Breast epithelium (tissue), 4 donors: ENCODE measurements at regions of chr4 and their contacts with region 1.

Region 1: DNA sequence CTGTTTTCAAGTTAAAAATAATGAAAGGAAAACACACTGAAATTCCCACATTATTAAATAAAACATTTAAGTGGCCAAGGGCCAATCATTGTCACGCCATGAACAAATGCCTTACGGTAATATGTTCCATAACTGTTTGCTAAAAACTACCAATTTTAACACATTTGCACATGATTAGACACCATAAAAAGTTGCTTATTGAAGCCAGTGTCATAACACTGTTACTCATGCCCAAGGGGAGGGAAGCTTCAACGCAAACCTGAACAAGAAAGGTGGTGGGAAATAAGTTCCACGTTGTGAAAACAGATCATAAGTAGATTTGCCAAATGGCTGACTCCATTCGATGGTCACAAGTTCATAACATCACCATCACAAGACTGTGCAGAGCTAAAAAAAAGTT is 739.3 kb upstream of the FAM241A start:
- DNase-seq: no peak
- H3K4me3 ChIP-seq: no peak overlapping the region
- H3K27ac ChIP-seq: no peak overlapping the region
- H3K4me1 ChIP-seq: no peaks in the 10 kb centered on the region
- H3K27me3 ChIP-seq: no peaks in the 10 kb centered on the region
- CTCF ChIP-seq: no peak
- POLR2A ChIP-seq: no peak

Region 2: GRCh38 chr4:110830461-110830860 is 575.5 kb before region 1 on chr4:
- intact Hi-C with region 1: no loop called
- DNase-seq: no peak
- H3K4me3 ChIP-seq: no peak overlapping the region
- H3K27ac ChIP-seq: no peak overlapping the region
- H3K4me1 ChIP-seq: no peaks in the 10 kb centered on the region
- H3K27me3 ChIP-seq: no peaks in the 10 kb centered on the region
- CTCF ChIP-seq: no peak
- POLR2A ChIP-seq: no peak

Region 3: GRCh38 chr4:111113591-111113990 is 292.4 kb before region 1 on chr4:
- intact Hi-C with region 1: no loop called
- DNase-seq: no peak
- H3K4me3 ChIP-seq: no peak overlapping the region
- H3K27ac ChIP-seq: no peak overlapping the region
- H3K4me1 ChIP-seq: no peaks in the 10 kb centered on the region
- H3K27me3 ChIP-seq: no peaks in the 10 kb centered on the region
- CTCF ChIP-seq: no peak
- POLR2A ChIP-seq: no peak

Region 4: GRCh38 chr4:111678479-111678878 is 272.5 kb after region 1 on chr4:
- intact Hi-C with region 1: no loop called
- DNase-seq: no peak
- H3K4me3 ChIP-seq: no peak overlapping the region
- H3K27ac ChIP-seq: peak overlapping the region; percentile 15 to 67
- H3K4me1 ChIP-seq: no peaks in the 10 kb centered on the region
- H3K27me3 ChIP-seq: no peaks in the 10 kb centered on the region
- CTCF ChIP-seq: no peak
- POLR2A ChIP-seq: no peak

Region 5: DNA sequence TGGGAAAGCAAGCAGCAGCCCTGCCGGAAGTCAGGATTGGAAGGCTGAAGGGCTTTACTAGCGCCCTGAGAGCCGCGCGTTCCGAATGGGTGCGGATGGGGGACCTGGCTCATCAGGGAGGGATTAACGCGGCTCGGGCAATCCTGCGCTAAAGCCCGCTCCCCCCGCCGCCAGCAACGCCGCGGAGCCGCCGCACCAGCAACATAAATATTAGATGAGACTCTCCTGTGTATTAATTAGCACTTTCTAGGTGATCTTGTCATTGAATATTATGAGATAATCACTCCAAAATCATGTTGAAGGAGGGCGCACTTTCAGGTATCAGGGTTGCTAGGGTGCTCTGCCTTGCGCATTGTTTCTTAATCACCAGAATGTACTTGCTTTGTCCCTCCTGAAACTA is 382.1 kb after region 1 on chr4:
- intact Hi-C with region 1: loop called (anchors 5 kb)
- DNase-seq: no peak
- H3K4me3 ChIP-seq: no peak overlapping the region
- H3K27ac ChIP-seq: no peak overlapping the region
- H3K4me1 ChIP-seq: no peaks in the 10 kb centered on the region
- H3K27me3 ChIP-seq: peaks cover 0 to 14% of the 10 kb centered on the region in 2 donors
- CTCF ChIP-seq: no peak
- POLR2A ChIP-seq: no peak